T-cell (primary cell): ENCODE measurements at regions of chr3 and their contacts with region 1.

Region 1: GRCh38 chr3:197711973-197712707 is 24.6 kb downstream of the RUBCN start:
- DNase-seq: peak; percentile 65 to 95 (median 89)
- ATAC-seq: peak; percentile 99
- H3K4me3 ChIP-seq: peak overlapping the region in 1 of 2 donors; percentile 50
- H3K4me3 Mint-ChIP-seq: peak overlapping the region; percentile 68 to 88 (median 85)
- H3K27ac ChIP-seq: peak overlapping the region; percentile 96
- H3K27ac Mint-ChIP-seq: peak overlapping the region; percentile 99 to 100
- H3K4me1 ChIP-seq: peaks cover 11 to 16% of the 10 kb centered on the region in 2 experiments
- H3K4me1 Mint-ChIP-seq: peaks cover 21 to 31% (median 30%) of the 10 kb centered on the region in 3 donors
- H3K27me3 ChIP-seq: no peaks in the 10 kb centered on the region
- H3K27me3 Mint-ChIP-seq: no peaks in the 10 kb centered on the region

Region 2: GRCh38 chr3:197354319-197355001 is 357.7 kb before region 1 on chr3:
- CTCF ChIA-PET with region 1: no interaction called
- POLR2A ChIA-PET with region 1: no interaction called
- DNase-seq: no peak
- ATAC-seq: no peak
- H3K4me3 ChIP-seq: no peak overlapping the region
- H3K4me3 Mint-ChIP-seq: no peak overlapping the region
- H3K27ac ChIP-seq: no peak overlapping the region
- H3K27ac Mint-ChIP-seq: no peak overlapping the region
- H3K4me1 ChIP-seq: no peaks in the 10 kb centered on the region
- H3K4me1 Mint-ChIP-seq: peaks cover 0 to 7% (median 0%) of the 10 kb centered on the region in 3 donors
- H3K27me3 ChIP-seq: peaks cover 0 to 15% of the 10 kb centered on the region in 2 experiments
- H3K27me3 Mint-ChIP-seq: peaks cover 11 to 12% of the 10 kb centered on the region in 2 donors

Region 3: GRCh38 chr3:197749601-197750395 is 37.7 kb after region 1 on chr3 and contains the start of gene FYTTD1:
- CTCF ChIA-PET with region 1: interaction called, 3 to 8 read pairs
- POLR2A ChIA-PET with region 1: interaction called, 3 to 10 read pairs
- DNase-seq: peak; percentile 75 to 94 (median 83)
- ATAC-seq: peak; percentile 81 to 91 (median 90)
- H3K4me3 ChIP-seq: peak within 1 kb of the TSS; percentile 63 to 78
- H3K4me3 Mint-ChIP-seq: peak within 1 kb of the TSS; percentile 92 to 95 (median 93)
- H3K27ac ChIP-seq: peak within 1 kb of the TSS; percentile 78
- H3K27ac Mint-ChIP-seq: peak within 1 kb of the TSS; percentile 96 to 97
- H3K4me1 ChIP-seq: peaks cover 5 to 32% of the 10 kb centered on the region in 2 experiments
- H3K4me1 Mint-ChIP-seq: peaks cover 46 to 51% (median 47%) of the 10 kb centered on the region in 3 donors
- H3K27me3 ChIP-seq: no peaks in the 10 kb centered on the region
- H3K27me3 Mint-ChIP-seq: no peaks in the 10 kb centered on the region
- total RNA-seq, gene FYTTD1: 52.4 to 58.4 (median 55.6) TPM